Right ventricle myocardium inferior (tissue), 1 donor: ENCODE measurements at regions of chr10 and their contacts with region 1.

Region 1: GRCh38 chr10:61835069-61835945 is 66.2 kb upstream of the ARID5B start:
- DNase-seq: no peak
- ATAC-seq: no peak

Region 2: GRCh38 chr10:61662794-61663259 is 172.5 kb before region 1 on chr10 and contains the start of gene CABCOCO1:
- intact Hi-C with region 1: loop called (anchors 10 kb)
- DNase-seq: peak; percentile 69
- ATAC-seq: peak; percentile 84
- total RNA-seq, gene CABCOCO1: not detected